ENCODE measurements at regions of chr11 and their contacts with region 1.

Region 1: GRCh38 chr11:108222686-108223448 is at the start of gene ATM:
- DNase-seq: peak; percentile 98 to 100 (median 99)
- ATAC-seq: peak; percentile 77
- H3K4me3 ChIP-seq: peak within 1 kb of the TSS; percentile 90 to 92
- H3K4me3 Mint-ChIP-seq: no peak within 1 kb of the TSS
- H3K27ac ChIP-seq: peak within 1 kb of the TSS; percentile 96 to 97
- H3K27ac Mint-ChIP-seq: no peak within 1 kb of the TSS
- H3K4me1 ChIP-seq: peaks cover 36% of the 10 kb centered on the region
- H3K4me1 Mint-ChIP-seq: peaks cover 52% of the 10 kb centered on the region
- H3K27me3 ChIP-seq: no peaks in the 10 kb centered on the region
- H3K27me3 Mint-ChIP-seq: no peaks in the 10 kb centered on the region
- CTCF ChIP-seq: peak; percentile 70
- total RNA-seq, gene ATM: 272 to 273 TPM

Region 2: DNA sequence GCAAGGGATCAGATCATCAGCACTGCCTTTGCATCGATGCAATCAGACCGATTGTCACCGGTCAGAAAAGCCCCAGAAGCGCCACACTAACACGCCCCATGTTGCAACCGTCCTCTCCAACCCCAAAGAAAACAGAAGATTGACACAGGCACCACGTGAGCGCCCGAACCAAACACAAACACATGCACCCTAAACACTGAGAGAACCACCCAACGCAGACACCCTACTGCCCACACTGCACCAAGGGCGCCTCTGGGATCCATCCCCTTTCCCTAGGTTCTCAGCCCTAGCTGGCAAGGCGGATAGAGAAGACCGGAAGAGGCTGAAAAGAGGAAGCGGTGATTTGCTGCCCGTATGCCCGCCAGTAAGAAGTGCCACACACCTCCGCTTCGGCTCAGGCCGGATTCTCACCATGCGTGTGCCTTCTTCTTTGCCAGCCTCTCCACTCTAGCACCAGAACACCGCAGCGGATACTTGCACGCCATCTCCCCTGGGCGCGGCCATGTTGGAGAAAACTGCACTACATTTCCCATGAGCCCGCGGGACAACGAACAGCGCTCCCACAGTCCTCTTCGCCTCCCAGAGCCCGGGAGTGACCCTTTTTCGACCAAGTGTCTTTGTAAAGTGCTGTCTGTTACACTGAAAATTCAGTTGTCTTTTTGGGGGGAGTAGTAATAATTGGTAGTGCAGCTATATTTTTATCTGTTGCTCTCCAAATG is 657.5 kb before region 1 on chr11 and contains the start of gene ALKBH8:
- CTCF ChIA-PET with region 1: no interaction called
- POLR2A ChIA-PET with region 1: no interaction called
- intact Hi-C with region 1: loop called in 1 of 2 experiments (anchors 5 kb)
- DNase-seq: peak; percentile 51 to 88 (median 80)
- ATAC-seq: peak; percentile 93
- H3K4me3 ChIP-seq: peak within 1 kb of the TSS; percentile 72 to 87
- H3K4me3 Mint-ChIP-seq: peak within 1 kb of the TSS; percentile 92
- H3K27ac ChIP-seq: peak within 1 kb of the TSS; percentile 69 to 77
- H3K27ac Mint-ChIP-seq: peak within 1 kb of the TSS; percentile 92
- H3K4me1 ChIP-seq: peaks cover 24% of the 10 kb centered on the region
- H3K4me1 Mint-ChIP-seq: peaks cover 58% of the 10 kb centered on the region
- H3K27me3 ChIP-seq: no peaks in the 10 kb centered on the region
- H3K27me3 Mint-ChIP-seq: no peaks in the 10 kb centered on the region
- CTCF ChIP-seq: no peak
- total RNA-seq, gene ALKBH8: 10.2 to 11.8 TPM

Region 3: GRCh38 chr11:108069947-108070346 is 152.9 kb before region 1 on chr11:
- CTCF ChIA-PET with region 1: no interaction called
- POLR2A ChIA-PET with region 1: no interaction called
- intact Hi-C with region 1: no loop called
- DNase-seq: peak in 2 of 9 experiments; percentile 31 to 63
- ATAC-seq: peak; percentile 85
- H3K4me3 ChIP-seq: no peak overlapping the region
- H3K4me3 Mint-ChIP-seq: no peak overlapping the region
- H3K27ac ChIP-seq: peak overlapping the region; percentile 21 to 58
- H3K27ac Mint-ChIP-seq: peak overlapping the region; percentile 64
- H3K4me1 ChIP-seq: peaks cover 16% of the 10 kb centered on the region
- H3K4me1 Mint-ChIP-seq: peaks cover 21% of the 10 kb centered on the region
- H3K27me3 ChIP-seq: no peaks in the 10 kb centered on the region
- H3K27me3 Mint-ChIP-seq: no peaks in the 10 kb centered on the region
- CTCF ChIP-seq: no peak

Region 4: GRCh38 chr11:108121274-108122155 is 101.4 kb before region 1 on chr11 and contains the start of gene ACAT1:
- CTCF ChIA-PET with region 1: interaction called, 3 read pairs
- POLR2A ChIA-PET with region 1: no interaction called
- intact Hi-C with region 1: loop called in 1 of 2 experiments (anchors 1 kb)
- DNase-seq: peak; percentile 89 to 98 (median 97)
- ATAC-seq: peak; percentile 98
- H3K4me3 ChIP-seq: peak within 1 kb of the TSS; percentile 82 to 89
- H3K4me3 Mint-ChIP-seq: peak within 1 kb of the TSS; percentile 88
- H3K27ac ChIP-seq: peak within 1 kb of the TSS; percentile 59 to 70
- H3K27ac Mint-ChIP-seq: peak within 1 kb of the TSS; percentile 78
- H3K4me1 ChIP-seq: peaks cover 31% of the 10 kb centered on the region
- H3K4me1 Mint-ChIP-seq: peaks cover 43% of the 10 kb centered on the region
- H3K27me3 ChIP-seq: no peaks in the 10 kb centered on the region
- H3K27me3 Mint-ChIP-seq: no peaks in the 10 kb centered on the region
- CTCF ChIP-seq: no peak
- total RNA-seq, gene ACAT1: 14.2 to 15.0 TPM

Region 5: GRCh38 chr11:108246885-108247284 is 24.0 kb after region 1 on chr11:
- CTCF ChIA-PET with region 1: interaction called, 5 read pairs
- POLR2A ChIA-PET with region 1: interaction called, 384 read pairs
- intact Hi-C with region 1: loop called (anchors 1 to 5 kb)
- DNase-seq: no peak
- ATAC-seq: no peak
- H3K4me3 ChIP-seq: no peak overlapping the region
- H3K4me3 Mint-ChIP-seq: no peak overlapping the region
- H3K27ac ChIP-seq: peak overlapping the region; percentile 17 to 37
- H3K27ac Mint-ChIP-seq: peak overlapping the region; percentile 91
- H3K4me1 ChIP-seq: peaks cover 84% of the 10 kb centered on the region
- H3K4me1 Mint-ChIP-seq: peaks cover 74% of the 10 kb centered on the region
- H3K27me3 ChIP-seq: no peaks in the 10 kb centered on the region
- H3K27me3 Mint-ChIP-seq: no peaks in the 10 kb centered on the region
- CTCF ChIP-seq: no peak

Region 6: DNA sequence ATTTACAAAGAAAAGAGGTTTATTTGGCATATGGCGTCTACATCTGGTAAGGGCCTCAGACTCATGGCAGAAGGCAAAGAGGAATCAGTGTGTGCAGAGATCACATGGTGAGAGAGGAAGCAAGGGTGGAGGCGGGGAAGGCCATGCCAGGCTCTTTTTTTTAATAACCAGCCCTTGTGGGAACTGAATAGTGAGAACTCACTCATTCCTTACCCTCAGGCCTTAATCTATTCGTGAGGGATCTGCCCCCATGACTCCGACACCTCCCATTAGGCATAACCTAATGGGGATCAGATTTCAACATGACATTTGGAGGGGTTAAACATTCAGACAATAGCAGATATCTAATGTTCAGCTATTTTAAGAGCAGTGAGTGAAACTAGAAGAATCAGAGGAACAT is 55.7 kb after region 1 on chr11:
- CTCF ChIA-PET with region 1: interaction called, 3 read pairs
- POLR2A ChIA-PET with region 1: interaction called, 56 read pairs
- intact Hi-C with region 1: loop called in 1 of 2 experiments (anchors 2 kb)
- DNase-seq: peak in 1 of 9 experiments; percentile 16
- ATAC-seq: no peak
- H3K4me3 ChIP-seq: no peak overlapping the region
- H3K4me3 Mint-ChIP-seq: no peak overlapping the region
- H3K27ac ChIP-seq: peak overlapping the region in 1 of 2 experiments; percentile 6
- H3K27ac Mint-ChIP-seq: peak overlapping the region; percentile 79
- H3K4me1 ChIP-seq: peaks cover 49% of the 10 kb centered on the region
- H3K4me1 Mint-ChIP-seq: peaks cover 68% of the 10 kb centered on the region
- H3K27me3 ChIP-seq: no peaks in the 10 kb centered on the region
- H3K27me3 Mint-ChIP-seq: no peaks in the 10 kb centered on the region
- CTCF ChIP-seq: no peak

Region 7: DNA sequence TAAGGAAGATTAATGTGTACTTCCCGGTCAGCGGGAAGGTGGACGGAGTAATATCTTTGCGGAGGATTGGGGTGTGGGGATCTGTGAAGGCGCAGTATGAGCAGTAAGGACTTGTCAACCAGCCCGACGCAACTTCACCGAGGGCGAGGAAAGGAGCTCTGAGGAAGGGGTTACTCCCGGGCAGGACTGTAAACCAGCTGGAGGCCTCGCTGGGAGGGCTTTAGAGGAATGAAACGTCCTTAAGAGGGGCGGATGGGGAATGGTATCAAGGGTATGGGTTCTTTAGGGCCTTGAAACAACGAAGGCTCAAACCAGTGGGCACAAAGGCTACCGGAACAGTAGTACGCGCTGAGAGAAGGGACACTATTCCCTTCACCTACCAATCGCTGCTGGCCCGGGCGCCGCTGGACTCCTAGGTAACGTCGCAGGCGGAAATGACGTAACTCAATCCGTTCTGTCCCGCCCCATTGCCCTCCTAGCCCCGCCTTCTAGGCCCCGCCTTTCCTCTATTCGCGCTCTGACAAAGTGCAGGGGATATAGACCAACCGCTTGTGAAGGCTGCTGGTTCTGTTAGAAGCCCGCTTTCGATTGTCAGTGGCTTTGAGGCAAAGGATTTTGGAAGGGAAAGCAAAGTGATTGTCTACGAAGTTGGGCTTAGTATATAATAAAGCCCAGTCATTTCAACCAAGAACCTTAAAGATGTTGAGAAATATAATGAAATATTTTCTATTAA is 244.4 kb after region 1 on chr11 and contains the start of gene C11orf65:
- CTCF ChIA-PET with region 1: no interaction called
- POLR2A ChIA-PET with region 1: interaction called, 3 read pairs
- intact Hi-C with region 1: loop called (anchors 1 to 10 kb)
- DNase-seq: peak; percentile 93 to 98 (median 95)
- ATAC-seq: peak; percentile 96
- H3K4me3 ChIP-seq: peak within 1 kb of the TSS; percentile 65 to 66
- H3K4me3 Mint-ChIP-seq: peak within 1 kb of the TSS; percentile 98
- H3K27ac ChIP-seq: peak within 1 kb of the TSS; percentile 93 to 94
- H3K27ac Mint-ChIP-seq: peak within 1 kb of the TSS; percentile 100
- H3K4me1 ChIP-seq: peaks cover 14% of the 10 kb centered on the region
- H3K4me1 Mint-ChIP-seq: peaks cover 8% of the 10 kb centered on the region
- H3K27me3 ChIP-seq: no peaks in the 10 kb centered on the region
- H3K27me3 Mint-ChIP-seq: no peaks in the 10 kb centered on the region
- CTCF ChIP-seq: no peak
- total RNA-seq, gene C11orf65: 0.31 TPM in 1 of 2 experiments, not detected in the other

Region 8: GRCh38 chr11:108593214-108593922 is 370.5 kb after region 1 on chr11 and contains the start of gene EXPH5:
- CTCF ChIA-PET with region 1: no interaction called
- POLR2A ChIA-PET with region 1: no interaction called
- intact Hi-C with region 1: loop called in 1 of 2 experiments (anchors 5 kb)
- DNase-seq: peak; percentile 65 to 91 (median 85)
- ATAC-seq: peak; percentile 94
- H3K4me3 ChIP-seq: peak within 1 kb of the TSS; percentile 63 to 66
- H3K4me3 Mint-ChIP-seq: peak within 1 kb of the TSS; percentile 95
- H3K27ac ChIP-seq: peak within 1 kb of the TSS; percentile 22 to 69
- H3K27ac Mint-ChIP-seq: peak within 1 kb of the TSS; percentile 90
- H3K4me1 ChIP-seq: peaks cover 14% of the 10 kb centered on the region
- H3K4me1 Mint-ChIP-seq: peaks cover 16% of the 10 kb centered on the region
- H3K27me3 ChIP-seq: peaks cover 0 to 4% of the 10 kb centered on the region in 2 experiments
- H3K27me3 Mint-ChIP-seq: peaks cover 13% of the 10 kb centered on the region
- CTCF ChIP-seq: no peak
- total RNA-seq, gene EXPH5: 1.5 to 1.7 TPM

Measured in CD8-positive, alpha-beta T cell (primary cell).